ENCODE measurements at regions of chrX and their contacts with region 1.

Region 1: GRCh38 chrX:20266810-20267606 is at the start of gene RPS6KA3:
- DNase-seq: peak; percentile 89 to 91 (median 90)
- ATAC-seq: peak; percentile 92
- H3K4me3 ChIP-seq: peak within 1 kb of the TSS; percentile 90
- H3K27ac ChIP-seq: peak within 1 kb of the TSS; percentile 93
- H3K4me1 ChIP-seq: peaks cover 14 to 23% of the 10 kb centered on the region in 2 experiments
- H3K27me3 ChIP-seq: no peaks in the 10 kb centered on the region
- CTCF ChIP-seq: no peak
- EP300 ChIP-seq: no peak
- POLR2A ChIP-seq: peak; percentile 61
- RAD21 ChIP-seq: no peak
- polyA plus RNA-seq, gene RPS6KA3: 10.9 to 21.9 TPM

Region 2: DNA sequence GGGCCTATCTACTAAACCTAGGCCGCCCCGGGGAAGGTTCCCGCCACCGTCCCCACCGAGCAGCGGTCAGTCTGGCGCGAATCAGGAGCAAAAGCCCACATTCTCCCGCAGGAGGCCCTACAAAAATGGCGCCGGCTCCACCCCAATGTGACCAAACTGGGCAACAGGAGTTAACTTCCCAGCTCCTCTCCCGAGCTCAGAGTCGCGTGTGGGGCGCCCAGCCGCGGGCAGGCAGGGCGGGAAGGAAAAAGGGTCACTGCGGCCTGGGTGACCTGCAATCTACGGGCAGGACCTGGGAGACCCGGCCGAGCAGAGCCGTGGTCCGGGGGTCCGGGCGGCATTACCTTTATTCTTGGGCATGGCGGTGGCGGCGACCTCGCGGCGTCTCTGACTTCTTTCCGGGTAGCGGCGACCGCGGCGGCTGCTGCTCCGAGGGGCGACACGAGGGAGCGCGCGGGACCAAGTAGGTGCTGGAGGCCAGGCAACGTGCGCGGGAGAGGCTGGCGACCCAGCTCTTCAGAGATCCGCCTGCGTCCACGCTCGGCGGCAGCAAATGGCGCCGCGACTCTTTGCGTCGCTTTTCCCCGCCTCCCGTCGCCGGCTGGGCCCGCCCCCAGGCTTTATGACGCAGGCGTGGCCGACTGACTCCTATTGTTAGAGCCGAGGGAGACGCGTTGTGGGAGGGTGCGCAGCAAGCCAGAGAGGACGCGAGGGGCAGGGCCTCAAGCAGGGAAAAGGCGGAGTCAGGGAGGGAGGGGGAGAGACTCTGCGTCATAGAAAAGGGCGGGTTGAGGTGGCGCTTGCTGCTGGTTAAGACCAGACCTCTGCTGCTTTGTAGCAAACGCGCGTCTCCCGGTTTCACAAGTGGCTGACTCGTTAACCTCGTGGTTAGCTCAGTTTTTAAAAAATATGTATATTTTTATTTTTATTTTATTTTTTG is 125.5 kb before region 1 on chrX and contains the start of gene EIF1AX:
- CTCF ChIA-PET with region 1: no interaction called
- POLR2A ChIA-PET with region 1: interaction called, 4 read pairs
- in situ Hi-C with region 1: no loop called
- intact Hi-C with region 1: loop called (anchors 2 kb)
- DNase-seq: peak; percentile 83 to 97 (median 86)
- ATAC-seq: peak; percentile 97
- H3K4me3 ChIP-seq: peak within 1 kb of the TSS; percentile 97
- H3K27ac ChIP-seq: peak within 1 kb of the TSS; percentile 89
- H3K4me1 ChIP-seq: peaks cover 4 to 19% of the 10 kb centered on the region in 2 experiments; a peak in 4 of 5 replicates
- H3K27me3 ChIP-seq: no peaks in the 10 kb centered on the region
- CTCF ChIP-seq: no peak
- EP300 ChIP-seq: no peak
- POLR2A ChIP-seq: peak; percentile 90
- RAD21 ChIP-seq: no peak
- polyA plus RNA-seq, gene EIF1AX: 54.2 to 56.4 TPM

Region 3: GRCh38 chrX:20181598-20182329 is 85.2 kb before region 1 on chrX:
- CTCF ChIA-PET with region 1: no interaction called
- POLR2A ChIA-PET with region 1: no interaction called
- in situ Hi-C with region 1: no loop called
- intact Hi-C with region 1: no loop called
- DNase-seq: no peak
- ATAC-seq: no peak
- H3K4me3 ChIP-seq: no peak overlapping the region
- H3K27ac ChIP-seq: no peak overlapping the region
- H3K4me1 ChIP-seq: no peaks in the 10 kb centered on the region
- H3K27me3 ChIP-seq: no peaks in the 10 kb centered on the region
- CTCF ChIP-seq: no peak
- EP300 ChIP-seq: no peak
- POLR2A ChIP-seq: no peak
- RAD21 ChIP-seq: no peak

Region 4: GRCh38 chrX:20197641-20198210 is 69.3 kb before region 1 on chrX:
- CTCF ChIA-PET with region 1: no interaction called
- POLR2A ChIA-PET with region 1: no interaction called
- in situ Hi-C with region 1: no loop called
- intact Hi-C with region 1: no loop called
- DNase-seq: no peak
- ATAC-seq: no peak
- H3K4me3 ChIP-seq: no peak overlapping the region
- H3K27ac ChIP-seq: no peak overlapping the region
- H3K4me1 ChIP-seq: no peaks in the 10 kb centered on the region
- H3K27me3 ChIP-seq: no peaks in the 10 kb centered on the region
- CTCF ChIP-seq: no peak
- EP300 ChIP-seq: no peak
- POLR2A ChIP-seq: no peak
- RAD21 ChIP-seq: no peak

Region 5: GRCh38 chrX:20224814-20225487 is 42.1 kb before region 1 on chrX:
- CTCF ChIA-PET with region 1: no interaction called
- POLR2A ChIA-PET with region 1: no interaction called
- in situ Hi-C with region 1: no loop called
- intact Hi-C with region 1: loop called (anchors 5 kb)
- DNase-seq: no peak
- ATAC-seq: peak; percentile 66
- H3K4me3 ChIP-seq: no peak overlapping the region
- H3K27ac ChIP-seq: peak overlapping the region; percentile 33; the same call in 1 of the 3 replicates
- H3K4me1 ChIP-seq: peaks cover 0 to 19% of the 10 kb centered on the region in 2 experiments; a peak in 3 of 5 replicates
- H3K27me3 ChIP-seq: no peaks in the 10 kb centered on the region
- CTCF ChIP-seq: no peak
- EP300 ChIP-seq: no peak
- POLR2A ChIP-seq: no peak
- RAD21 ChIP-seq: no peak

Region 6: GRCh38 chrX:20285513-20285912 is 18.5 kb after region 1 on chrX:
- CTCF ChIA-PET with region 1: no interaction called
- POLR2A ChIA-PET with region 1: no interaction called
- in situ Hi-C with region 1: no loop called
- intact Hi-C with region 1: no loop called
- DNase-seq: no peak
- ATAC-seq: no peak
- H3K4me3 ChIP-seq: no peak overlapping the region
- H3K27ac ChIP-seq: no peak overlapping the region
- H3K4me1 ChIP-seq: no peaks in the 10 kb centered on the region
- H3K27me3 ChIP-seq: no peaks in the 10 kb centered on the region; a peak in 1 of 5 replicates
- CTCF ChIP-seq: no peak
- EP300 ChIP-seq: no peak
- POLR2A ChIP-seq: no peak
- RAD21 ChIP-seq: no peak

Region 7: GRCh38 chrX:20333672-20334071 is 66.7 kb after region 1 on chrX:
- CTCF ChIA-PET with region 1: no interaction called
- POLR2A ChIA-PET with region 1: no interaction called
- in situ Hi-C with region 1: no loop called
- intact Hi-C with region 1: no loop called
- DNase-seq: no peak
- ATAC-seq: no peak
- H3K4me3 ChIP-seq: no peak overlapping the region
- H3K27ac ChIP-seq: no peak overlapping the region
- H3K4me1 ChIP-seq: no peaks in the 10 kb centered on the region
- H3K27me3 ChIP-seq: peaks cover 2 to 6% of the 10 kb centered on the region in 2 experiments; a peak in 3 of 5 replicates
- CTCF ChIP-seq: no peak
- EP300 ChIP-seq: no peak
- POLR2A ChIP-seq: no peak
- RAD21 ChIP-seq: no peak

Region 8: GRCh38 chrX:20362268-20363267 is 95.6 kb after region 1 on chrX:
- CTCF ChIA-PET with region 1: no interaction called
- POLR2A ChIA-PET with region 1: no interaction called
- in situ Hi-C with region 1: no loop called
- intact Hi-C with region 1: loop called (anchors 10 kb)
- DNase-seq: peak in 2 of 4 experiments; percentile 13 to 23
- ATAC-seq: peak; percentile 72
- H3K4me3 ChIP-seq: no peak overlapping the region
- H3K27ac ChIP-seq: peak overlapping the region; percentile 37
- H3K4me1 ChIP-seq: peaks cover 0 to 8% of the 10 kb centered on the region in 2 experiments; a peak in 2 of 5 replicates
- H3K27me3 ChIP-seq: no peaks in the 10 kb centered on the region
- CTCF ChIP-seq: no peak
- EP300 ChIP-seq: no peak
- POLR2A ChIP-seq: no peak
- RAD21 ChIP-seq: no peak

Measured in K562 (cell line).